ENCODE measurements at regions of chr11 and their contacts with region 1.

Region 1: DNA sequence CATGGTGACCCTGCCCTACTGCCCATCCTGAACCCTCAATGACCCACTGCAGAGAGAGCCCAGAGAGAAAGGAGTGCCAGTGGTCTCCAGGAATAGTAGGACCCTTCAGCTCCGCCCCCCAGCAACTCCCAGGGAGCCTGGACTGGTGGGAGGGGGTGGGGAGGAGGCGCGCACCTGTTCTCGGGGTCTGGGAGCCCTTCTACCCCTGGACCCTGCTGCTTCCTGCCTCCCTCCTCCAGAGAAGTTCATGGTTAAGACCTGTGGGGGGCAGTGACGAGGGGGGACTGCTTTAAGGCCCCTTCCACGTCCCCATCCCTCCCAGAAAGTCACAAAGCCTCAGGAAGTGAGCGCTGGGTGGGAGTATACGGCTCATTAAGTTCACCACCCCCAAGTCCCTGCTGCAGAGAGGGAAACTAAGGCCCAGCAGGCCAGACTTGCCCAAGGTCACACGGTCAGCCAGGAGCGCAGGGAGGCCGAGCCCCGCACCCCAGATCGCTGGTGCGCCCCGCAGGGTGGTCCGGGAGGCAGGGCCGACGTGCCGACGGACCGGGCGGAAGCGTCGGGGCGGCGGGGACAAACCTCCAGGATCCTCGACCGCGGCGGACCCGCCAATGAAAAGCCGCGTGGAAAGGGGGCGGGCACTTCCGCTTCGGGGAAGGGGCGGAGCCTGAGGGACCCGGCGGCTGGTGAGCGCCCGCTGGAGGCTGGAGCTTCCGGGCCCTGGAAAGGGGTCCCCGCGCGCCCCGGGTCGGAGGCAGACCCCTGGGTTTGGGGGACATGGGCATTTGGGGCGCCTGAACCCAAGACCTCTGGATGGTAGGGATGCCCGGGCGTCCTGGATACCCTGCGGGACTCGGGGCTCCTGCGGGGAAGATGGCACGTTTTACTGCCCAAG is at the starts of genes NUDT22 and TRPT1:
- DNase-seq: peak; percentile 77
- ATAC-seq: peak; percentile 78
- H3K4me3 ChIP-seq: peak within 1 kb of the TSS; percentile 78 to 96 (median 82)
- H3K27ac ChIP-seq: peak within 1 kb of the TSS; percentile 56
- H3K4me1 ChIP-seq: peaks cover 34% of the 10 kb centered on the region
- H3K27me3 ChIP-seq: no peaks in the 10 kb centered on the region
- CTCF ChIP-seq: peak; percentile 65
- EP300 ChIP-seq: no peak
- POLR2A ChIP-seq: peak in 1 of 2 experiments; percentile 9; a peak in 1 of 4 replicates
- RAD21 ChIP-seq: no peak
- total RNA-seq, gene NUDT22: 38.5 and 39.8 TPM in 2 replicates
- total RNA-seq, gene TRPT1: 21.0 and 24.8 TPM in 2 replicates

Region 2: GRCh38 chr11:64173616-64174355 is 52.1 kb before region 1 on chr11:
- CTCF ChIA-PET with region 1: no interaction called
- POLR2A ChIA-PET with region 1: no interaction called
- in situ Hi-C with region 1: no loop called
- intact Hi-C with region 1: no loop called
- DNase-seq: no peak
- ATAC-seq: peak; percentile 51
- H3K4me3 ChIP-seq: no peak overlapping the region
- H3K27ac ChIP-seq: no peak overlapping the region
- H3K4me1 ChIP-seq: peaks cover 13% of the 10 kb centered on the region
- H3K27me3 ChIP-seq: no peaks in the 10 kb centered on the region
- CTCF ChIP-seq: no peak
- EP300 ChIP-seq: no peak
- POLR2A ChIP-seq: no peak
- RAD21 ChIP-seq: no peak

Region 3: GRCh38 chr11:64240394-64241174 is 14.7 kb after region 1 on chr11 and contains the start of gene FKBP2:
- CTCF ChIA-PET with region 1: no interaction called
- POLR2A ChIA-PET with region 1: interaction called, 27 read pairs
- in situ Hi-C with region 1: no loop called
- intact Hi-C with region 1: no loop called
- DNase-seq: peak; percentile 93
- ATAC-seq: peak; percentile 46
- H3K4me3 ChIP-seq: peak within 1 kb of the TSS; percentile 84 to 93 (median 88)
- H3K27ac ChIP-seq: peak within 1 kb of the TSS; percentile 91
- H3K4me1 ChIP-seq: peaks cover 67% of the 10 kb centered on the region
- H3K27me3 ChIP-seq: no peaks in the 10 kb centered on the region; a peak in 1 of 5 replicates
- CTCF ChIP-seq: no peak
- EP300 ChIP-seq: no peak
- POLR2A ChIP-seq: peak in 1 of 2 experiments; percentile 88; a peak in 2 of 4 replicates
- RAD21 ChIP-seq: no peak
- total RNA-seq, gene FKBP2: 29.4 and 53.3 TPM in 2 replicates

Region 4: DNA sequence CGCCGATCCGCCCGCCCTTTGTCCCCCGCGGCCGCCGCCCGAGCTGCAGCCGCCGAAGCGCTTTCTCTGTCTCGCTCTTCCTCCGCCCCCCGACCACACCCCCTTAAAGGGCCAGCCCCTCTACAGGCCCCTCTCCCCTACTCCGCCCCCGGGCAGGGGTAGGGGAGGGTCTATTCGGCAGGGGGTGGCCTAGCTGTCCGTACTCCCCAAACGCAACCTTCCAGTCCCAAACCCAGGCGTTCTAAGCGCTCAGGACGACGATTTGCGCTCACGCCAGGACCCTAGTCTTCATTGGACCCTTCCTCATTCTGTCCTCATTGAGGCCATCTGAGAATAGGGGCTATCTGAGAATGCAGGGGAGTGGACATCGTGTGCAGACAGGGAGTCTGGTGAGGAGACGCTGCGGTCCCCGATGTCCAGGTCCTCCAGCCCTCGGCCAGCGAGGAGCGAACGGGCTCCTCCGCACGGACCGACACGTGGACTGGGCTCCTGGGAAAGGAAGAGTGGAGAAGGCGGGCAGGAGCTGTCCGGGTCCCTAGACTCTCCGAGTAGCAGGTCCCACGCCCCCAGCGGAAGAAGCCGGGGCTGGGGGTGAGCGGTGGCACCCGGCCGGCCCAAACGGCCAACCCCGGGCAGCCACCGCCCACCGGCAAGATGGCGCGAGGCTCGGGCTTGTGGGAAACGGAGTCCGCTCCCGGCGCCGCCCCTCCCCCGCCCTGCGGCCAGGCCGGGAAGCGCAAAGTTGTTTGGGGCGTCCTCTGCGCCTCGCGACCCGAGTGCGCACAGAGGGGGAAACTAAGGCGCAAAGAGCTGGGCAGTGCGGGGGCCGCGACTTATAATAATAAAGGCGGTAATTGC is 21.2 kb after region 1 on chr11 and contains the start of gene PPP1R14B:
- CTCF ChIA-PET with region 1: no interaction called
- POLR2A ChIA-PET with region 1: interaction called, 18 read pairs
- in situ Hi-C with region 1: no loop called
- intact Hi-C with region 1: no loop called
- DNase-seq: peak; percentile 80
- ATAC-seq: peak; percentile 71
- H3K4me3 ChIP-seq: peak within 1 kb of the TSS; percentile 79 to 95 (median 84)
- H3K27ac ChIP-seq: peak within 1 kb of the TSS; percentile 83
- H3K4me1 ChIP-seq: peaks cover 69% of the 10 kb centered on the region
- H3K27me3 ChIP-seq: no peaks in the 10 kb centered on the region; a peak in 1 of 5 replicates
- CTCF ChIP-seq: no peak; the same call in none of the 2 replicates
- EP300 ChIP-seq: no peak
- POLR2A ChIP-seq: peak in 1 of 2 experiments; percentile 44; a peak in 1 of 4 replicates
- RAD21 ChIP-seq: no peak
- total RNA-seq, gene PPP1R14B: 120 and 148 TPM in 2 replicates